H1 (cell line): ENCODE measurements at regions of chr15 and their contacts with region 1.

Region 1: DNA sequence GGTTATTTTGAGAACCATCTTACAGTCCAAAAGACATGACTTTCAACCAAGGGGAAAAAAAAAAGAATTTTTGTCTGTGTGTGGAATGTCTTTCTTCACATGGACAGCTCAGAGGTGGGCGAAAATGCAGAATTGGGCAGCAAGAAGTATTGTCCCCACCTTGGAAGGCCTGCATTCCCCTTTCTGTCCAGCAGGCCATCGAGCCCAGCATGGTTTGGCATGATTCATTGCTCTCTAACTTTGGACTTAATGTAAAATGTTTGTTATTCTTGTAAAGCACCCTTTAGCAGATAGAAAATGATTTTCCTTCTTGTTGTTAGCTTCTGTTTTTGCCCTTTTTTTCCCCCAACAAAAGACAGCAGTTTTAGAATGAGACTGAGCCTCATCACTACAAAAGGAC is 12.4 kb downstream of the MYO1E start:
- DNase-seq: no peak
- H3K4me3 ChIP-seq: no peak overlapping the region
- H3K27ac ChIP-seq: no peak overlapping the region
- H3K4me1 ChIP-seq: peaks cover 6 to 14% (median 8%) of the 10 kb centered on the region in 4 experiments; a peak in 6 of 7 replicates
- H3K27me3 ChIP-seq: no peaks in the 10 kb centered on the region
- CTCF ChIP-seq: peak; percentile 13 to 69 (median 66); a peak in 2 of 4 replicates
- EP300 ChIP-seq: no peak
- POLR2A ChIP-seq: no peak
- RAD21 ChIP-seq: peak; percentile 16 to 17; a peak in 2 of 4 replicates

Region 2: DNA sequence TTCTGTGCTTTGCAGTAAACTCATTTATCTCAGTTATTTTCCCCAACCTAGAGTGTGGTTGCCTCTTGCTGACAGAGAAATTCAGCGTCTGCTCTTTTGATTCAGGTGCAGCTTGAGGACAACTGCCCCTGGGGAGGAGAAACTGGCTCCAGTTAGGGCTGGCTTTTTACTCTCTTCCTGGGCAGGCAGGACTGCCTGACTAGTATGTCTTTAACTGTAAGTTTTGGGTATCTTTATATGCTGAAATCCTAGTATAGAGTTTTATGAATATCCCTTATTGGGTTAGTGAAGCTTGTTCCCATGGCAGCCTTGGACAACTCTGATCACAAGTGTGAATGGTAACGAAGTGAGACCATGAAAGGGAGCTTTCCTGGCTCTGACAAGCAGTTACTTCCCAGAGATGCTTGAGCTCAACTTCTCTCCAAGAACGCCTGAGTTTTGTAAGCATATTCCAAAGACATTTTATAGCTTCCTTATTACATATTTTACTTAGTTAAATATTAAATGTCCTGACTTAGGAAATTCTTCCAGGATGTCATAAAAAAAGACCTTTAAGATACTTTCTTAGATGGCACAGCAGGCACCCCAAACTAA is 228.2 kb before region 1 on chr15:
- CTCF ChIA-PET with region 1: no interaction called
- POLR2A ChIA-PET with region 1: no interaction called
- DNase-seq: no peak
- H3K4me3 ChIP-seq: no peak overlapping the region
- H3K27ac ChIP-seq: no peak overlapping the region
- H3K4me1 ChIP-seq: no peaks in the 10 kb centered on the region; a peak in 1 of 7 replicates
- H3K27me3 ChIP-seq: no peaks in the 10 kb centered on the region
- CTCF ChIP-seq: no peak
- EP300 ChIP-seq: no peak
- POLR2A ChIP-seq: no peak
- RAD21 ChIP-seq: no peak

Region 3: GRCh38 chr15:59268168-59268979 is 91.9 kb before region 1 on chr15:
- CTCF ChIA-PET with region 1: no interaction called
- POLR2A ChIA-PET with region 1: no interaction called
- DNase-seq: no peak
- H3K4me3 ChIP-seq: no peak overlapping the region
- H3K27ac ChIP-seq: no peak overlapping the region
- H3K4me1 ChIP-seq: peaks cover 0 to 2% (median 0%) of the 10 kb centered on the region in 4 experiments; a peak in 3 of 7 replicates
- H3K27me3 ChIP-seq: no peaks in the 10 kb centered on the region
- CTCF ChIP-seq: no peak
- EP300 ChIP-seq: no peak
- POLR2A ChIP-seq: no peak
- RAD21 ChIP-seq: no peak

Region 4: DNA sequence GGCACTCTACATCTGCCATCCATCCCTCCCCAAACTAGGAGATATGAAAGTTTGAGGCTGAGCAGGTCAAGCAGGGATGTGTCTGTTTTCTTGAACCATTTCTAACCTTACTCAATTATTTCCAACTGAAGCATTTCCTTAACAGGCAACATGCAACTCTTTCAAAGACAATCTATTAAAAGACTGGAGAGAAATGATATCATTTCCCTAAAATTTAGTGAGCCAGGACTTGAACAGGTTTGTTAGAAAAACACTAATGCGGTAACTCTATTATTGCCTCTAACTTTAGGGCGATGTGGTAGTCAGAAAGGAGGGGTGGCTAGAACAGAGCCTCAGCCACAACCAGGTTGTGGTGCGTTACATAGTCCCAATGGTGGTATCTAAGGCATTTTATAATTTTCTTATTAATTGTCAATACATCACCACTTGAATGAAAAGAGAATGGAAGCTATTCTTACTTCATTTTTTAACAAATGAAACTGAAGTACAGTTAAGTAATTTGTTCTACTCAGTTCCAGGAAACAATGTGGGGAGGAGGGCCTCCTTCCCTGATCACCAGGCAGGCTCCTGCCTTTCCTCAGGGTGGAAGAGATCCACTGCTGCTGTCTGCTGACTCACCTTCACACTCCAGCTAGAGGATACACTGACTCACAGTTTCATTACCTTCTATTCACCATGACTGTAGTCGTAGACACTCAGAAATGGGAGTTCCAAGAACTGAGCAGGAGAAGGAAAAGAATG is 10.5 kb before region 1 on chr15:
- CTCF ChIA-PET with region 1: interaction called, 29 read pairs
- POLR2A ChIA-PET with region 1: interaction called, 151 read pairs
- DNase-seq: no peak
- H3K4me3 ChIP-seq: no peak overlapping the region
- H3K27ac ChIP-seq: no peak overlapping the region
- H3K4me1 ChIP-seq: peaks cover 16 to 38% (median 26%) of the 10 kb centered on the region in 4 experiments
- H3K27me3 ChIP-seq: no peaks in the 10 kb centered on the region; a peak in 1 of 7 replicates
- CTCF ChIP-seq: no peak
- EP300 ChIP-seq: no peak
- POLR2A ChIP-seq: no peak
- RAD21 ChIP-seq: no peak

Region 5: GRCh38 chr15:59372352-59373211 is 12.3 kb after region 1 on chr15 and contains the start of gene MYO1E:
- CTCF ChIA-PET with region 1: interaction called, 9 read pairs
- POLR2A ChIA-PET with region 1: interaction called, 151 read pairs
- DNase-seq: peak; percentile 92 to 93
- H3K4me3 ChIP-seq: peak within 1 kb of the TSS; percentile 79 to 86 (median 82)
- H3K27ac ChIP-seq: peak within 1 kb of the TSS; percentile 95
- H3K4me1 ChIP-seq: peaks cover 0 to 7% (median 1%) of the 10 kb centered on the region in 4 experiments; a peak in 3 of 7 replicates
- H3K27me3 ChIP-seq: no peaks in the 10 kb centered on the region
- CTCF ChIP-seq: no peak
- EP300 ChIP-seq: 0 out of 3 replicates have a peak, but pooled peaks of 1 of the 2 experiments have one; percentile 23
- POLR2A ChIP-seq: peak; percentile 98 to 99
- RAD21 ChIP-seq: no peak
- total RNA-seq, gene MYO1E: 138 and 142 TPM in 2 replicates

Region 6: GRCh38 chr15:59722476-59722875 is 362.2 kb after region 1 on chr15:
- CTCF ChIA-PET with region 1: no interaction called
- POLR2A ChIA-PET with region 1: no interaction called
- DNase-seq: no peak
- H3K4me3 ChIP-seq: no peak overlapping the region
- H3K27ac ChIP-seq: no peak overlapping the region
- H3K4me1 ChIP-seq: no peaks in the 10 kb centered on the region
- H3K27me3 ChIP-seq: no peaks in the 10 kb centered on the region
- CTCF ChIP-seq: no peak
- EP300 ChIP-seq: no peak
- POLR2A ChIP-seq: no peak
- RAD21 ChIP-seq: no peak